PC-3 (cell line): ENCODE measurements at regions of chr2 and their contacts with region 1.

Region 1: DNA sequence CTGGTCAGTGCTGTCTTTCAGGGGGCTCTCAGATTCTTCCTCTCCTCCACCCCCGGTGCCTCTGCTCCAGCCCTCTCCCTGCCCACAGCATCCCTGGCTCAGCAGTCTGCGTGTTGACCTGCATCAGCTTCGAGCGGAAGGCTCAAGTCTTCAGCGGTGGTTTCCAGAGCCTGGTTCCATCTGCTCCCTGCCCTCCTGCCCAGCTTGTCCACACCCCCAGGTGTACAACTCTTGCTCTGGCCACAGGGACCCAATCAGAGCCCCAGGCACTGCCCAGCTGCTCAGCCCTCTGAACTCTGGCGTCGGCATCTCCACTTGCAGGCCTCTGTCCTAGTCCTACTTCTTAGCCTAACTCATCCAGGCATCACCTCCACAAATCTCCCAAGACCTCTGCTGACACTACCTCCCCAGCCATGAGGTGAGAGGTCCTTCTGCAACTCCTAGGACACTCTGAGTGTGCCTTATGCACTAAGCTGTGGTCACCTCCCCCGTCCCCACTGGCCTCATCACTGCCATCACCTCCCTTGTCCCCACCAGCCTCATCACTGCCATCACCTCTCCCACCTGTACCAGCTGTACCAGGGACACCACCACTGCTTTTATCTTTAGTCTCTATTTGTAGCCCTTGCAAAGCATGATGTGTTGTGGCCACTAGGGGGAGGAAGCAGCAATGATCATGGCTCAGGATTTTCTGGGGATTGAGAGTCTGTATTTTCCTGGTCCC is 60.9 kb downstream of the EDAR start:
- DNase-seq: peak; percentile 72
- ATAC-seq: peak; percentile 87
- H3K4me3 ChIP-seq: no peak overlapping the region
- H3K27ac ChIP-seq: no peak overlapping the region
- H3K4me1 ChIP-seq: peaks cover 9% of the 10 kb centered on the region
- H3K27me3 ChIP-seq: no peaks in the 10 kb centered on the region
- CTCF ChIP-seq: peak; percentile 94

Region 2: DNA sequence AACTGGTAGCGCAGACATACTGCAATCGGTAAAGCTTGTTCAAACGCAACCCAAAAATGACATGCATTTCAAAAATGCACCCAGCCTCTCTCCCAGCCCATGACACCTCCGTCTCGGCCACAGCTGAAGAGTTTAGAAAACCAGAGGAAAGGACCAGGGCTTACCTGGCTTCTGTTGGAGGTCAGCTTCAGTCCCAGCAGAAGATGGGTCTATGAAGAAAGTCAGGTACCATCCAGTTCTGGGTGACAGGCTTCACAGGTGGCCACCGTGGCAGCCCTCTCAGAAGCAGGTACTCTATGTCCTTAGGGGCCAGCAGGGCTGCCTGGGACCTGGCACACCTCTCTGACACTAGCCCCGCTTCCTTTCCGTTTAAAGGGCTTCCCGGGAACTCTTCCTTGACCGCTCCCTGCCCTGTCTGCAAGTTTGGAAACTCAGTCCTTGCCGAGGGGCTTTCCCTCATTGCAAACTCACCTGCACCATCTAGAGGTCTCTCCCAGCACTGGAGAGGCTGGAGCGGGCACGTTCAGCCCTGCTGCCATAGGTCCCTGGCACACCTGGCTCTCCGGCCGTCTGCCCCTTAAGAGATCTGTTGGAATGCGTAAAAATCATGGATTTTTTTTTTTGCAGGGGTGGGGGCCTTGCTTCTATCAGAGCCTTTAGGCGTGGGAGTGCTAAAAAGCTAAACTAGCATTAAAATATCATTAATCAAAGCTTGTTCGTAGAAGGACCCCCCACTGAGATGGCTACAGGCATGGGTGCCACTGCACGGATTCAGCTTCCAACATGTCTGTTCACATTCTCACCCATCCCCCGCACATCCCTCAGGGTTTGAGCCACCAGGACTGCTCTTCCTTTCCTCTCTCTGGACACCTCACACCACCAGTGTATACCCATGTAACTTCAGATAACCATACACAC is 61.0 kb after region 1 on chr2 and contains the start of gene EDAR:
- CTCF ChIA-PET with region 1: no interaction called
- POLR2A ChIA-PET with region 1: no interaction called
- intact Hi-C with region 1: loop called (anchors 1 kb)
- DNase-seq: peak; percentile 77
- ATAC-seq: peak; percentile 98
- H3K4me3 ChIP-seq: peak within 1 kb of the TSS; percentile 20; the same call in 1 of the 2 replicates
- H3K27ac ChIP-seq: no peak within 1 kb of the TSS
- H3K4me1 ChIP-seq: no peaks in the 10 kb centered on the region; the same call in 1 of the 2 replicates
- H3K27me3 ChIP-seq: no peaks in the 10 kb centered on the region
- CTCF ChIP-seq: peak; percentile 89
- total RNA-seq, gene EDAR: 0.04 TPM in 1 of 2 replicates, not detected in the other